CD8-positive, alpha-beta T cell (primary cell): ENCODE measurements at regions of chr15 and their contacts with region 1.

Region 1: DNA sequence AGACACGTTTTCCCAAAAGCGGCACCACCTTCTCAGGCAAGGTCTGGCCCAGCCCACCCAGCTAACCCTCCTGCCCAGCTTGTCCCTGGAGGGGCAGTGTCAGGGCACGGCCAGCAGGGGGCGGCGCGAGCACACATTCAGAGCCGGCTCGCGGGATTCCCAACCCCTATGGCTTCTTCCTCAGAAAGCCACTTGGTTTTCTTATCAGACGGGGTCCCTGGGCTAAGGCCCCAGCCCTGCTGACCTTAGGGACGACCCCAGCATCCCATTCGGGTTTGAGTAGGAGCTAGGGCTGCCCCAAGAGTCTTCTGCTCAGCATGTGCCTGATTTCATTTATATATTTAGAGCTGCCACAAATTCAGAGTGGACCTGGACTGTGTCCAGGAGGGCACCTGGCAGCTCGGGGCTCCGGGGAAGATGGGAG is 14.5 kb downstream of the RLBP1 start:
- DNase-seq: peak; percentile 39 to 79 (median 70)
- ATAC-seq: peak; percentile 90
- H3K4me3 ChIP-seq: no peak overlapping the region
- H3K4me3 Mint-ChIP-seq: no peak overlapping the region
- H3K27ac ChIP-seq: no peak overlapping the region
- H3K27ac Mint-ChIP-seq: no peak overlapping the region
- H3K4me1 ChIP-seq: peaks cover 8% of the 10 kb centered on the region
- H3K4me1 Mint-ChIP-seq: peaks cover 24% of the 10 kb centered on the region
- H3K27me3 ChIP-seq: no peaks in the 10 kb centered on the region
- H3K27me3 Mint-ChIP-seq: peaks cover 2% of the 10 kb centered on the region
- CTCF ChIP-seq: peak; percentile 94

Region 2: GRCh38 chr15:89057504-89058133 is 149.3 kb before region 1 on chr15:
- CTCF ChIA-PET with region 1: interaction called, 12 read pairs
- POLR2A ChIA-PET with region 1: no interaction called
- intact Hi-C with region 1: no loop called
- DNase-seq: peak; percentile 61 to 90 (median 82)
- ATAC-seq: peak; percentile 100
- H3K4me3 ChIP-seq: no peak overlapping the region
- H3K4me3 Mint-ChIP-seq: no peak overlapping the region
- H3K27ac ChIP-seq: no peak overlapping the region
- H3K27ac Mint-ChIP-seq: no peak overlapping the region
- H3K4me1 ChIP-seq: no peaks in the 10 kb centered on the region
- H3K4me1 Mint-ChIP-seq: peaks cover 2% of the 10 kb centered on the region
- H3K27me3 ChIP-seq: no peaks in the 10 kb centered on the region
- H3K27me3 Mint-ChIP-seq: no peaks in the 10 kb centered on the region
- CTCF ChIP-seq: peak; percentile 99

Region 3: DNA sequence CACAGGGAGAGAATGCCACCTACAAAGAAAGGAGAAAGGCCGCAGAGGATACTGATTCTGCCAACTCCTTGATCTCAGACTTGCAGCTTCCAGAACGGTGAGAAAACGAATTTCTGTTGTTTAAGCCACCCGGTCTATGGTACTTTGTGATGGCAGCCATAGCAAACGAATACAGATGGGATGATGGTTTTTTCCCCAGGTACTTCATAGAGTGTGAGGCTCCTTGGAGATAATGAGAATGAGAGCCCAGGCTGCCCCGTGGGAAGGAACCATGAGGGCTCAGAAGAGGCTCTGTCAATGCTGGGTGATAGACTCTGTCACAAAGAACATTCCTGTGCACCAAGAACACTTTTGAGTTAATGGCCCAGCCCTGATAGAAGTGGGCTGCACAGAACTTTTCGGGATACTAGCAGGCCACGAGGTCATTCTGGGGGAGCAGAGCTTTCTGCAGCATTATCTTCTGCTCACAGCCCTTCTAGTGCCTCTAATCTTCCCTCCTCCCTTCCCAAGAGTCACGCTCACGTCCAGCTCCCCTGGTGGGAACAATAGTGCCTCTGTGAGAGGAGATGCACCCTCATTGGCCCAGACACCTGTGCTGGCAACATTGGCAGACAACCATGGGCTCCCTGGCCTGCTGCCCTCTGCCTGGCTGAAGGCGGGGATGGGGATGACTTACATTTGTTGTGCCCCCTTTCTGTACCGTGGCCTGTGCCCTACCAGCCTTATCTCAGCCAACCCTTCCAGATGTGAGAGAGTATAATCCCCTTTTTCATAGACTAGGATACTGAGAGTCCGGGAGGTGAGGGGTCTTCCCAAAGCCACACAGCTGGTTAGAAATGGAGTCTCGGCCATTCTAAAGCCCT is 19.7 kb after region 1 on chr15:
- CTCF ChIA-PET with region 1: interaction called, 25 read pairs
- POLR2A ChIA-PET with region 1: no interaction called
- intact Hi-C with region 1: no loop called
- DNase-seq: no peak
- ATAC-seq: no peak
- H3K4me3 ChIP-seq: no peak overlapping the region
- H3K4me3 Mint-ChIP-seq: no peak overlapping the region
- H3K27ac ChIP-seq: no peak overlapping the region
- H3K27ac Mint-ChIP-seq: no peak overlapping the region
- H3K4me1 ChIP-seq: no peaks in the 10 kb centered on the region
- H3K4me1 Mint-ChIP-seq: no peaks in the 10 kb centered on the region
- H3K27me3 ChIP-seq: no peaks in the 10 kb centered on the region
- H3K27me3 Mint-ChIP-seq: no peaks in the 10 kb centered on the region
- CTCF ChIP-seq: no peak

Region 4: DNA sequence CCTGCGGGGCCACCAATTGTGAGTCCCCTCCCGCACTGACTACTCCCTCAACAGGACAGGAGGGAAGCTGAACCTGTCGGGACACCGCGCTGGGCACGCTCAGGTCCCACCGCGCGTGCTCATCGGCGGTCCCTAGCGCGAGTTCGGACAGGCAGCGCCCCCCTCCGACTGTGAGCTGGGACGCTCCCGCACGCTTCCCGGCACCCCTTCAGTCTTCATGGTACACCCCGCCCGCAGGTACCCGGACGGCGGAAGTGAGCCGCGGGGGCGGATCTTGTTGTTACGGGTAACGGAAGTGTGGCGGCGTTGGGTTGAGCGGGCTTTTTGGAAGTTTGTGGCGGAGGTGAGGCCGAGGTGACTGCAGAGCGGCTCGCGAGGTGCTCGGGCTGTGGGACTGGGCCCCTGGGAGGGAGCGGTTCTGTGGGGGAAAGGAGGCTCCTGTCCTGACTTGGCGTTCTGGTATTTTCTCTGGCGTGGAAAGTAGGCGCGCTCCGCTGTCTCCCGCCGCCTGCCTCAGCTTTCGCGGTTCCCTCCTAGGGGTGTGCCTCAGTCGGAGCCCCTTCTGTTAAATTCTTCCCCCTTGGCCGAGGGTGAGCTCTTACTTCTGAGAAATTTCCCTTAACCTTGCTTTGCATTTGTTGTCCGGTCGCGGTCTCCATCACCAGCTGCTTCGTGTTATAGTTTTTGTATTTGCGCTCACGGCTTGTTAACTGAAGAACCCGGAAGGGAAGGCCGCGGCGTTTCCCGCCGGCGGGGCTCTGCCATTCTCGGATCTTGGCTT is 37.0 kb after region 1 on chr15 and contains the start of gene FANCI:
- CTCF ChIA-PET with region 1: interaction called, 14 read pairs
- POLR2A ChIA-PET with region 1: interaction called, 3 read pairs
- intact Hi-C with region 1: no loop called
- DNase-seq: peak; percentile 93 to 98 (median 97)
- ATAC-seq: peak; percentile 98
- H3K4me3 ChIP-seq: peak within 1 kb of the TSS; percentile 77 to 85
- H3K4me3 Mint-ChIP-seq: peak within 1 kb of the TSS; percentile 95
- H3K27ac ChIP-seq: peak within 1 kb of the TSS; percentile 24 to 52
- H3K27ac Mint-ChIP-seq: peak within 1 kb of the TSS; percentile 90
- H3K4me1 ChIP-seq: peaks cover 15% of the 10 kb centered on the region
- H3K4me1 Mint-ChIP-seq: peaks cover 25% of the 10 kb centered on the region
- H3K27me3 ChIP-seq: no peaks in the 10 kb centered on the region
- H3K27me3 Mint-ChIP-seq: no peaks in the 10 kb centered on the region
- CTCF ChIP-seq: no peak
- total RNA-seq, gene FANCI: 5.1 to 6.3 TPM

Region 5: DNA sequence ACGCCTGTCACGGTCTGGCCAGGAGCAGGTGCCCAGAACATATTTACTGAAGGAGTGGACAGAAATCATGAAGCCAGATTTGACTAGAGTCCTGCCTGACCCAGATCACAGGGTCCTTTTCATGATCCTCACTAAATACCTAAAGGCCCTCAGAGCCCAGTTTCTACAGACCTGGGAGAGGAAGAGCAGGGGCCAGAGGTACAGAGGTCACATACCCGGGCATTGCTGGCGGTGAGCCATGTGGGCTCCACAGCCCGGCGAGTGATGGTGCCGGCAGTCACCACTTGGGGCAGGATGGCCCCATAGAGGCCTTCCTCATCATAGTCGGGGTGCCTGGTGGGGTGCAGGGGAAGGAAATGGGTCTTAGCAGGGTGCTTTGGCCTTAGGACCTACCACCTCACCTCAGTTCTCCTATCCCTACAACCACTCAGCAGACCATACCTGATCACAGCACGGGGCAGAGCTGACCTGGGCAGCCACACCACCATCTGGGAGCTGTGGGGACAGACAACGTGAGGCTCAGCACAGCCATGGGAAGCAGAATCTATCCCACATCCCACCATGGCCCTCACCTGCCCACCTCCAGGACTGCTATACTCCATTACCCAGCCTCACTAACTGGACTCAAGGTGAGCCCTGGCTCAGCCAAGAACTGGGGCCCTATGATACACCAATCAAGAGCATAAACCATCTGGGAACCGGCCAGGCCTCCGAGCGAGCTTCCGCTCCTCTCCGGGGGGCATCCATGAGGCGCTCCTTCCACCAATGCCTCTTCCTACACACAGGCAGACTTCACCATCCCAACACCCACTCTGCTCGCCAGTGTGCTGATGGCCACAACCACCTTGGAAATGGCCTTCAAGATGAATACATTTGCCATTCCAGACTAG is 114.8 kb after region 1 on chr15:
- CTCF ChIA-PET with region 1: interaction called, 6 read pairs
- POLR2A ChIA-PET with region 1: no interaction called
- intact Hi-C with region 1: loop called in 1 of 2 experiments (anchors 10 kb)
- DNase-seq: no peak
- ATAC-seq: no peak
- H3K4me3 ChIP-seq: no peak overlapping the region
- H3K4me3 Mint-ChIP-seq: no peak overlapping the region
- H3K27ac ChIP-seq: no peak overlapping the region
- H3K27ac Mint-ChIP-seq: peak overlapping the region; percentile 55
- H3K4me1 ChIP-seq: no peaks in the 10 kb centered on the region
- H3K4me1 Mint-ChIP-seq: peaks cover 2% of the 10 kb centered on the region
- H3K27me3 ChIP-seq: no peaks in the 10 kb centered on the region
- H3K27me3 Mint-ChIP-seq: no peaks in the 10 kb centered on the region
- CTCF ChIP-seq: no peak

Region 6: DNA sequence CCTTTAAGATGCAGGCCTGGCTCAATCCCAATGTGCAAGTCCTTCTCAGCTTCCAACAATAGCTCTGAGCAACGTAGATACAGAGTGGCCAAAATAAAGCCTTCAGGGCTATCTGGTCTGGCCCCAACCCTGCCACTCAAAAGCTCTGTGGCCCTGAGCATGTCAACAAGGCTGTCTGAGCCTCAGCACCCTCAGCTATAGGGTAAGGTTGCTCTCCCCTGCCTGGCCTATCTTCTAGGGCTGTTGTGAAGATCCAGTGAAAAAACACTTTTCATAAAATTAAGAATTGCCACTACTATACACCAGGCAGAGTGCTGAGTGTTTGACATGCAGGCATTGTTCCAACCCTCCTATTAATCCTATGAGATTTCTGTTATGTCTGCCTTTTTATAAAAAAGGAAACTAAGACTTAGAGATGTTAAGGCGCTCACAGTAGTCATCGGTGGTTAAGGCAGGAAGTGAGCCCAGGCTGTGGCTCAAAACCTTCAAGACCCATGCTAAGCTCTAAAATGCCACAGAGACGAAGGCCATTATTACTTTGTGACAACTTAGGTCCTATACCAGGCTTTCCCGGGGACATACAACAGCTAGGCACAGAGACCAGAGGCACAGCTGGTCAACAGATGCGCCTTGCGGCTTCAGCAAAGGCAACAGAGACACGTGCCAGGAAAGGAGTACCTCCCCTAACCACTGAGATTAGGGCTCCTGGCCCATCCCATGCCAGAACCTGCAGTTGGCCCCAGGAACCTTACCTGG is 122.6 kb after region 1 on chr15:
- CTCF ChIA-PET with region 1: interaction called, 13 read pairs
- POLR2A ChIA-PET with region 1: no interaction called
- intact Hi-C with region 1: no loop called
- DNase-seq: peak in 8 of 9 experiments; percentile 24 to 71 (median 42)
- ATAC-seq: peak; percentile 29
- H3K4me3 ChIP-seq: peak overlapping the region in 1 of 2 experiments; percentile 10
- H3K4me3 Mint-ChIP-seq: peak overlapping the region; percentile 35
- H3K27ac ChIP-seq: peak overlapping the region in 1 of 2 experiments; percentile 71
- H3K27ac Mint-ChIP-seq: peak overlapping the region; percentile 34
- H3K4me1 ChIP-seq: peaks cover 61% of the 10 kb centered on the region
- H3K4me1 Mint-ChIP-seq: peaks cover 52% of the 10 kb centered on the region
- H3K27me3 ChIP-seq: no peaks in the 10 kb centered on the region
- H3K27me3 Mint-ChIP-seq: no peaks in the 10 kb centered on the region
- CTCF ChIP-seq: no peak

Region 7: DNA sequence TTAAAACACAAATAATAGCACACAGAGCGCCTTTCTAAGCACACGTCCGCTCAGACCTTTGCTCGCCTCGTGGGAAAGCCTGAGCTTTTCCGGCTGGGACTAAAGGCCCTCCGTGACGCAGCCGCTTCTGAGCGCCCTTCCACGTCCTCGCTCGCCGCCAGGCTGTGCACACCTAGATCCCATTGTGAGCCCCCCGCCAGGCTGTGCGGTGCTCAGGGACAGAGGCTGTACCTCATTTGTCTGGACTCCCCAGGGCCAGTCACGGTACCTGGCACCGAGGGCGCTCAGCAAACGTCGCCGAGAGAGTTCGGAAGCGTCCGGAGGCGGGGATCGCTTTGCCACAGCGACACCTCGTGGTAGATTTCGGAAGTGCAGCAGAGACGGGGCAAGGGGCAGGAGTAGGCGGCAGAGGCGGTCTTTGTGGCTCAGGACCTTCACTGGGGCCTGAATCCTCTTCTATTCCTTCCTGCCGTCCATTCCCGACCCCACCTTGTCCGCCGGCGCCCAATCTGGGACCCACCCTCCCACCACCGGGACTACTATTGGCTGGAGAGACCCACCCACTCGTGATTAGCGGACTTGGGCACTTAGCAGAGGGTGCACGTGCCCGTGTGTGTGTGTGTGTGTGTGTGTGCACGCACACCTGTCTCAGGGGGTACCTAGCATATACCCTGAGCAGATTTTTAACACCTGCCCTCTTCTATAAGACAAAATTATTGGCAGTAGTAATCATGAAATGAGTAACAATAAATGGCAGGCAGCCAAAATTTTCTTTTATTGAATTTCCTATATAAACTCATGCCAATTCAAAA is 223.8 kb after region 1 on chr15:
- CTCF ChIA-PET with region 1: interaction called, 10 read pairs
- POLR2A ChIA-PET with region 1: no interaction called
- intact Hi-C with region 1: loop called in 1 of 2 experiments (anchors 1 kb)
- DNase-seq: peak; percentile 75 to 95 (median 84)
- ATAC-seq: peak; percentile 95
- H3K4me3 ChIP-seq: peak overlapping the region; percentile 38 to 49
- H3K4me3 Mint-ChIP-seq: peak overlapping the region; percentile 79
- H3K27ac ChIP-seq: no peak overlapping the region
- H3K27ac Mint-ChIP-seq: no peak overlapping the region
- H3K4me1 ChIP-seq: no peaks in the 10 kb centered on the region
- H3K4me1 Mint-ChIP-seq: peaks cover 6% of the 10 kb centered on the region
- H3K27me3 ChIP-seq: peaks cover 0 to 4% of the 10 kb centered on the region in 2 experiments
- H3K27me3 Mint-ChIP-seq: peaks cover 23% of the 10 kb centered on the region
- CTCF ChIP-seq: peak; percentile 92